ENCODE measurements at regions of chr2 and their contacts with region 1.

Region 1: GRCh38 chr2:235793163-235793752 is 299.4 kb downstream of the AGAP1 start:
- DNase-seq: peak; percentile 37
- H3K4me3 ChIP-seq: no peak overlapping the region
- H3K27ac ChIP-seq: no peak overlapping the region
- H3K4me1 ChIP-seq: peaks cover 0 to 3% of the 10 kb centered on the region in 2 experiments; a peak in 1 of 4 replicates
- H3K27me3 ChIP-seq: no peaks in the 10 kb centered on the region
- CTCF ChIP-seq: no peak; the same call in 1 of the 2 replicates
- EP300 ChIP-seq: no peak
- RAD21 ChIP-seq: peak; percentile 42

Region 2: GRCh38 chr2:235806986-235807750 is 13.9 kb after region 1 on chr2:
- CTCF ChIA-PET with region 1: interaction called, 17 read pairs
- POLR2A ChIA-PET with region 1: no interaction called
- DNase-seq: no peak
- H3K4me3 ChIP-seq: no peak overlapping the region
- H3K27ac ChIP-seq: no peak overlapping the region
- H3K4me1 ChIP-seq: peaks cover 0 to 2% of the 10 kb centered on the region in 2 experiments; a peak in 1 of 4 replicates
- H3K27me3 ChIP-seq: no peaks in the 10 kb centered on the region
- CTCF ChIP-seq: no peak
- EP300 ChIP-seq: no peak
- RAD21 ChIP-seq: no peak

Region 3: DNA sequence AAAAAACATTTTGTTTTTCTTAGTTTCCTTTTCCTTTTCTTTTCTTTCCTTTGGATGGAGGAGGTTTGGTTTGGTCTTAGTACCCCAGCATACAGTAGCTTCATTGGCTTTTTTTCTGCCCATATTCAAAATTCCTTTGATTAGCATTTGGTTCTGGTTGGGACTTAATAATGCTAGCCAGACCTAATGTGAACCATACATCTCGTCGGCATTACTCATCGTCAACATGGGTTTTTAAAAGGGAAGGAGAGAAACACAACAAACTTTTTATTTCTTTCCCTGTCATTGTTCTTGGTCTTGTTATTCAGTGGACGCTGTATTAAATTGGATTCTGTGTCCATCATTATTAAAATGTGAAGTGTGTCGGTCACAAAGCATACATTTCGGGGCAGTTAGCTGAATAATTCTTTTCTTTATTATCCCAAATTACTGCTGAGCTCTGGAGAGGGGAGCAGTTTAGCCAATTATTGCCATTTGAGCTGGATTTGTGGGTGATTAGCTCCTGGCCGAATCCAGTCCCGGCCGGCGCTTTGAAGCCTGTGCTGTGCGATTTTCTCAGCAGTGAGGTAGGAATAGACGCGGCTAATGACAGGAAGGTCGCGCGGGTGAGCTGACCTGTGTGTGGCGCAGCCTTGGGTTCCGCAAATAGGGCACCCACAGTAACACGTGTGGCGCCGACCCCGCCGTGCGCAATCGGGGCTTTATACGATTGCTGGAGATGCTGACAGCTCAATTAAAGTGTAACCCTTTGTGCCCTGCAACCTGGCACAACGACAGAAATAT is 71.7 kb after region 1 on chr2:
- CTCF ChIA-PET with region 1: no interaction called
- POLR2A ChIA-PET with region 1: no interaction called
- DNase-seq: no peak
- H3K4me3 ChIP-seq: no peak overlapping the region
- H3K27ac ChIP-seq: no peak overlapping the region
- H3K4me1 ChIP-seq: peaks cover 0 to 9% of the 10 kb centered on the region in 2 experiments; a peak in 1 of 4 replicates
- H3K27me3 ChIP-seq: no peaks in the 10 kb centered on the region
- CTCF ChIP-seq: no peak
- EP300 ChIP-seq: no peak
- RAD21 ChIP-seq: no peak